ENCODE measurements at regions of chr15 and their contacts with region 1.

Region 1: DNA sequence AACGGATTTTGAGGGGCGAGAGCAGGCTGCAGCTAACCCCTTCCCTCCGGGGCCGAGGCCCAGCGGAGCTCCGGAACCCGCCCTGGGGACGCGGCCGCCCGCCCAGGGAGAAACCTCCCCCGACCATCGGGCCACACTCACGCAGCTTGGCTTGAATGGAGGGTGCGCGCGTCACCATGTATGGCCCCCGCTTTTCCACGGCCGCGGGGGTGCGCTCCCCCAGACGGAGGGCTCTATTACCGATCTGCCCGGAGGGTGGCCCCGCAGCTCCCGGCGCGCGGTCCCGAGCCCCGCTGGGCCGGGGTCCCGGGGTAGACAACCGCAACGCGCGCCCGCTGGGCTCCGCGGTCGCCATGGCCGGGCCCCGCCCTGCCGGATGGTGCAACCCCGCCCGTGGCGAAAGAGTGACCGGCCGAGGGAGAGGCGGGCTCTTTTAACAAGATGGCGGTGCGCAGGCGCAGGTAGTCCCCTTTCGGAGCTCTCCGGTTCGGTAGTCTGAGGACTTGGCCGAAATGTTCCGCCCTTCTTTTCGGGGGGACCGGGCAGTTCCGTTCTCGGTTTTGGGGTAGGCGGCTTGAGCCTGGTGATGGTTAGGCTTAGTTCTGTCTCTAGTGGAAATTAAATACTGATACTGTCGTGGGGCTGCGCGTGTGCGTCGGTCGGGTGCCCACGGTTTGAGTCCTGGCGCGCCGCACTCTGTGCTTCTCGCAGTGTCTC is at the start of gene FAM219B:
- DNase-seq: peak; percentile 62 to 87
- H3K4me3 ChIP-seq: peak within 1 kb of the TSS; percentile 96
- H3K27ac ChIP-seq: peak within 1 kb of the TSS; percentile 52
- H3K4me1 ChIP-seq: peaks cover 28% of the 10 kb centered on the region
- H3K27me3 ChIP-seq: no peaks in the 10 kb centered on the region
- CTCF ChIP-seq: no peak
- total RNA-seq, gene FAM219B: 41.8 and 45.5 TPM in 2 replicates

Region 2: DNA sequence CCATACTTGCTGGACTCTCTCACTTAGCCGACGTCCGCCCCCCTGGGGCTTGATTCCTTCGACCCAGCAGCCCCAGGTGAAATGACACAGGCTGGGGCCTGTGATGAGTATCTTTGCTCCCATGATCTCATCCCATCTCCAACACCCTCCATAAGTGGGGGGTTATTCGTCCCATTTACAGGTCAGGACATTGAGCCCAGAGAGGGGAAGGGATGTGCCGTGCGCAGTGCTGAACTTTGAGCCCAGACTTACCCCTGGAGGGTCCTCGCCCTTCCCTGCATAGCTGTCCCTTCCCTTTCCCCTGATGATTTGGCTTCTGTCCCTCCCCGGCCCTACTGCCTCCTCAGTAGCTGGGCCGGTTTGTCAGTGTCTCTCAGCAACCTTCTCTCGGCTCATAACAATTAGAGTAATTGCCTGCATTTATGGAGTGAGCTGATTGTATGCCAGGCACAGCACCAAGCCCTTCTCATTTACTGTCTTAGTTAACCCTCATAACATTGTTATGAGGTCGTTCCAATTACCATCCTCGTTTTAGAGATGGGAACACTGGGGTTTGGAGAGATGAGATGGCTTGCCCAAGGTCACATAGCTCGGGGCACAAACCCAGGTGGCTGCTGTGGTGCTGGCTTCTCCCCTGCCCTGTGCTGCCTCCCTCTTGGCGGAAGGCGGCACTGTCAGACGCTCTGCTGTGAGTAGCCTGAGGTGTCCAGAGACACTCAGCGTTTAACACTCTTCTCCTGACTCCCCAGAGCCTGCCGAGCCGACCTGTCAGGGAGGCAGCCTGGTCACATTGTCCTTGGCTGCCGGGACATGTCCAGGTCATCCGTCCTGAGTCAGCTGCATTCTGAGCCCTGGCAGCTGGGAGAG is 89.6 kb before region 1 on chr15:
- CTCF ChIA-PET with region 1: interaction called, 5 read pairs
- POLR2A ChIA-PET with region 1: interaction called, 4 read pairs
- intact Hi-C with region 1: loop called (anchors 5 kb)
- DNase-seq: peak; percentile 69 to 75
- H3K4me3 ChIP-seq: no peak overlapping the region
- H3K27ac ChIP-seq: peak overlapping the region; percentile 4; the same call in 1 of the 2 replicates
- H3K4me1 ChIP-seq: peaks cover 37% of the 10 kb centered on the region
- H3K27me3 ChIP-seq: no peaks in the 10 kb centered on the region
- CTCF ChIP-seq: no peak; the same call in 1 of the 2 replicates

Region 3: DNA sequence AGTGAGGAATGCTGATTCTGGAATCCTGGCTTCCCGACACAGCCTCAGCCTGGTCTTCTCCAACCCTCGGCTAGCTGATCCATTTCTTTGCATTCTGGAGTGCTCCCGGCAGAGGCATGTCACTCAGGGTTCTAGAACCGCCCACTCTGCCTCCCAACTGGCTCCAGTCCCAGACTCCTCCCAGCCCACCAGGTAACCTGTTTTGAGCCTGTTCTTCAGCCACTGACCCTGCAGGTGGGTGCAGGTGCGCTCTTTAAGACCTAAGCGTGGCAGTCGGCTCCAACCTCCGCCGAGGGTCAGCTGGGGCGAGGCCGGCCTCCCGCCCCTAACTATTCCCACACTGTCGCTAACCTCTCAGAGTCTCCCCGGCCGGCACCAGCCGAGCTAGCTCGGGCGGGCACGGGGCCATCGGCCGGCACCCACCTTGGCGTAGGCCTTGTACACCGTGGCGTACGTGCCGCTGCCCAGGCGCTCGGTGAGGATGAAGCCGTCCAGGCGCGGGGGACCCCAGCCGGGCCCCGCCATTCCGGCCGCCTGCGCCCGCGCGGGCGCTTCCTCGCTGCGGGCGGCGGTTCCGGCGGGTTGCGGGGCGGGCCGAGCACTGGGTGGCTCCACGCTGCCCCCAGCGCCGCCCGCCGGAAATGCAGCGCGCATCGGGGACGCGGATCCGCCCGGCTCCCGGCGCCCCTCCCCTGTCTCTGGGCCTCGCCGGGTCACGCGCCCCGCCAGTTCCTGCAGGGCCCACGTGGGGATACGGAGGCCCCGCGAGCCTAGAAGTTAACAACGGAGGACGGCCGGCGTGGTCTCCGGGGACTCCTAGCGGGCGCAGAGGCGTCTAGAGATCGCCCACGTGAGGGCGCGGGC is 63.8 kb before region 1 on chr15 and contains the start of gene ULK3:
- CTCF ChIA-PET with region 1: interaction called, 6 read pairs
- POLR2A ChIA-PET with region 1: no interaction called
- intact Hi-C with region 1: loop called (anchors 2 kb)
- DNase-seq: peak; percentile 78 to 87
- H3K4me3 ChIP-seq: peak within 1 kb of the TSS; percentile 91
- H3K27ac ChIP-seq: peak within 1 kb of the TSS; percentile 47
- H3K4me1 ChIP-seq: peaks cover 11% of the 10 kb centered on the region
- H3K27me3 ChIP-seq: no peaks in the 10 kb centered on the region
- CTCF ChIP-seq: peak; percentile 59
- total RNA-seq, gene ULK3: 30.2 and 46.6 TPM in 2 replicates

Region 4: GRCh38 chr15:74889883-74890664 is 16.5 kb before region 1 on chr15 and contains the start of gene MPI:
- CTCF ChIA-PET with region 1: interaction called, 11 read pairs
- POLR2A ChIA-PET with region 1: no interaction called
- intact Hi-C with region 1: no loop called
- DNase-seq: peak; percentile 63 to 77
- H3K4me3 ChIP-seq: peak within 1 kb of the TSS; percentile 70
- H3K27ac ChIP-seq: no peak within 1 kb of the TSS
- H3K4me1 ChIP-seq: peaks cover 33% of the 10 kb centered on the region
- H3K27me3 ChIP-seq: no peaks in the 10 kb centered on the region
- CTCF ChIP-seq: no peak
- total RNA-seq, gene MPI: 22.5 and 23.0 TPM in 2 replicates

Region 5: DNA sequence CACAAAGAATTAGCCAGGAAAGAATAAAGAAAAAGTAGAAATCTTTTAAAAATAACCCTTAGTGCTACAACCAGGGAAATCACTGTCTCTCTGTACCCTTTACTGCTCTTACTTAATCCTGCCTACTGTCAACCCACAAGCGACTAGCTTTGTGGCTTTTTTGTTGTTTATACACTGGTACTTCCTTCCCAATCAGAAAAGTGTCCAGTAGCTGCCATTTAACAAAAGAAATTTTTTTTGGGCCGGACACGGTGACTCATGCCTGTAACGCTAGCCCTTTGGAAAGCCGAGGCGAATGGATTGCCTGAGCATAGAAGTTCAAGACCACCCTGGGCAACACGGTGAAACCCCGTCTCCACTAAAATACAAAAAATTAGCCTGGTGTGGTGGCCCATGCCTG is 13.9 kb after region 1 on chr15:
- CTCF ChIA-PET with region 1: interaction called, 11 read pairs
- POLR2A ChIA-PET with region 1: no interaction called
- intact Hi-C with region 1: no loop called
- DNase-seq: no peak
- H3K4me3 ChIP-seq: no peak overlapping the region
- H3K27ac ChIP-seq: no peak overlapping the region
- H3K4me1 ChIP-seq: no peaks in the 10 kb centered on the region
- H3K27me3 ChIP-seq: no peaks in the 10 kb centered on the region
- CTCF ChIP-seq: no peak

Region 6: DNA sequence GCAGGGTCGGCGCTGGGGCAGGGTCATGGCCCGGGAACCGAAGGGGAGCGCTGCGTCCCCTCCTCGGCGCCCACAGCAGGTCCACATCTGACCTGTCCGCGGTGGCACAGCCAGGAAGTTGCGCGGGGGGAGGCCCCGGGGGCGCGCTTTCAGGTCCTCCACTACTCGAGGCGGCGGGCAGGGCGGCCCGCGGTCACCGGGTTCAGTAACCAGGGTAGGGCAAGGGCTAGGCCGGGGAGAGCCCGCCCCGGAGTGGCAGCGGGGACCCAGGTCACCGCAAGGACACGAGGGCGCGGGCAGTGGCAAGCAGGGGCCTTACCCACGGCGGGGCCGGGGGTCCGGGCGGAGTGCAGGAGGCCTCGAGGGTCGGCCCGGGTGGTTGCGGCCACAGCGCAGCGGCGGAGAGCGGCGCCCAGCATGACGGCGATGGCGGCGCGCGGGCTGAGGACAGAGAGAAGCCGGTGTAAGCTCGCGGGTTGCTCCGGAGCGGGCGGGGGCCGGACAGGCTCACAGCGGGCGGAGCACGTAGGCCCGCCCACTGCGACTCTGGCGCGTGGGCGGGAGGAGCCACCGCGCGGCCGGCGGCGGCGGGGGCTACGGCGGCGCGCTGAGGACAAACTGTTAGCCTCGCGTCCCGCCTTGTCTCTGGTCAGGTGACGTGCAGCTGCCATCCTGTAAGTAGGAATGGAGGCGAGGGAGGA is 31.1 kb after region 1 on chr15 and contains the start of gene COX5A:
- CTCF ChIA-PET with region 1: no interaction called
- POLR2A ChIA-PET with region 1: interaction called, 8 read pairs
- intact Hi-C with region 1: loop called (anchors 2 kb)
- DNase-seq: peak; percentile 90 to 95
- H3K4me3 ChIP-seq: peak within 1 kb of the TSS; percentile 90
- H3K27ac ChIP-seq: peak within 1 kb of the TSS; percentile 88
- H3K4me1 ChIP-seq: peaks cover 14% of the 10 kb centered on the region
- H3K27me3 ChIP-seq: no peaks in the 10 kb centered on the region
- CTCF ChIP-seq: no peak
- total RNA-seq, gene COX5A: 177 and 247 TPM in 2 replicates